Right ventricle myocardium superior (tissue), 1 donor: ENCODE measurements at regions of chr11 and their contacts with region 1.

Region 1: DNA sequence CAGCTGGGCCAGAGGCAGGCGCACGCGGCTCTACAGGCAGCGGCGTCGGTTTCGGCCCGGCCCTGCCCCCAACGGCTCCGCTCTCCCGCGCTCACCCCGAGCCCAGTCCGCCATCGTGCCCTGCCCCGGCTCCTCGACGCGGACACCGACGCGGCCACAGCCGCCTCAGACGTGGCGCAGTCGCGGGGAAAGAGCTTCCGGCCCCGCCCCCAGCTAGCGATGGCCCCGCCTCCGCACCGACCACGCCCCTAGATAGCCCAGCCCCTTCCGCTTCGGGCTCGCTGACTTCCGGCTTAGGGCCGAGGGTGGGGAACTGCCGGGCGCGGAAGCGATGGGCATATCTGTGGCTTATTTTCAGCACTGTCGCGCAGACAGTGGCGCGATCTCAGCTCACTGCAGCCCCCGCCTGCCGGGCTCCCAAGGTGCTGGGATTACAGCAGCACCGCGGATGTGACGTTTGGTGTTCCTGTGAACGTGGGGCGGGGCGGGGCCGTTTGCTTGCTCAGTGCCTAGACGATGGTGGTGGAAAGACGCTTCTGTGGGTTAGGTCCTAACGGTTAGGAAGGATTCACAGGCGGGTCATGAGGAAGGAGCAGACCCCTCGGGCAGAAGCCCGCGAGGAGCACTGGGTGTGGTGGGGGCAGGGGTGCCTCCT is at the starts of genes BET1L and RIC8A:
- DNase-seq: peak; percentile 97
- ATAC-seq: peak; percentile 92
- total RNA-seq, gene BET1L: 20.0 TPM
- total RNA-seq, gene RIC8A: 51.9 TPM

Region 2: DNA sequence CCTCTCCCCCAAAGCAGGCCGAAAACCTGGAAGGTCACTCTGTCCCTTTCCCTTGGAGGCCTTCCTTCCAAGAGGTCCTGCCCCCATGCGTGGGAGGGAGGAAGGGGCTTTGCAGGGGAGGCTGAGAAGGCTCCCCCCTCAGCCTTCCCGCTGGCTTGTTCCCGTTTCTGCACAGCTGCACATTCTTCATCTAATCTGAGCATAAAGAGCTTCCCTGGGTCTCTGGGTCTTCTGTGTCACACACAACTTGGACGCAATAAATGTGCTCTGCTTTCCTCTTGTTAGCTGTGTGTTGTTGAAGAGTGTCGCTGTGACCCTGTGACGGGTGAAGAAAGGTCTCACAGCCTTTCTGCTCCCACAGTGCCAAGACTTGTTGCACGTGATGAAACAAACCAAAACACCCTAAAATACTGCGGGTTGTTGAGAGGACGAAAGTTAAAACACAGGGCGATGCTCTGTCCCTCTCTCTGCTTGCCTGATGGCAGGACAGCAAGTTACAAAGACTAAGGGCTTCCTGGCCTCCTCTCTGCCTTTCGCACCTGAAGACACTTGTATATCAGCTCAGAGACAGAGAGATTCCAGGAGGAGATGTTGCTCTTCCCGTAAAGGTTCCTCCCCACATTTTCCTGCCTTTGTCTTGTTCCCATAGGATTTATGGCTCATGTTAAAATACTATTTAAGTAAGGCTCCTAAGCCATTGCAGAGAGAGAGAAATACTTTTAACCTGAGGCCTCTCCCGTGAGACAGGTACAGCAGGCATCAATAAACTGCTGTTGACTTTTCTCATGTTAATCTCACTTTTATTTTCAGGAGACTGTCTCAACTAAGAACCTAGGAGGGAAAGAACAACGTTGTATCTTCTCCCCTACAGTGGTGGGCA is 128.7 kb after region 1 on chr11:
- intact Hi-C with region 1: no loop called
- DNase-seq: peak; percentile 53
- ATAC-seq: peak; percentile 62

Region 3: GRCh38 chr11:518463-519250 is 311.3 kb after region 1 on chr11:
- intact Hi-C with region 1: loop called (anchors 10 kb)
- DNase-seq: peak; percentile 92
- ATAC-seq: peak; percentile 98